Activated CD8-positive, alpha-beta T cell treated with anti-CD3 and anti-CD28 coated beads, Interleukin-2, amount 10 ng/mL, durations not matched to agents 7 days and 5 days (primary cell): ENCODE measurements at regions of chr16 and their contacts with region 1.

Region 1: DNA sequence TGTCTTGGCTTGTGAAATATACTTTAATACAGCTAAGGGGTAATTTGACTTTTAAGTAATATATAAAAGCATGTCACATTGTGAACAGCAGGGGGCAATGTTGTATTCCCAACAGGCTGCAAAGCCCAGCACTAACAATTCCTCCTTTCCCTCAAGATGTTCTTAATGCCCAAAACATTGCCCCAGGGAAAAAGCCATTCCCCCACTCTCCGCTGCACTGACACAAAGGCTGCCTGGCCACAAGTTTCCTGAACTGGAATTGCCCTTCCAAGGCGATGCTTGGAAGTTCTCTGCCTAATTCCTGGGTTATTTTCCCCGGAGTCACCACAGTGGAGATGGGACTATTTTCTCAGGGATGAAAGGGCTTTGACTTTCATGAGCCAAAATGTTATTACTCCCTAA is 27.2 kb downstream of the CLEC16A start:
- DNase-seq: peak; percentile 65
- ATAC-seq: no peak
- H3K4me3 Mint-ChIP-seq: no peak overlapping the region
- H3K27ac Mint-ChIP-seq: no peak overlapping the region
- H3K4me1 Mint-ChIP-seq: peaks cover 80% of the 10 kb centered on the region
- H3K27me3 Mint-ChIP-seq: no peaks in the 10 kb centered on the region

Region 2: GRCh38 chr16:10954903-10955302 is 16.7 kb before region 1 on chr16:
- CTCF ChIA-PET with region 1: interaction called, 124 read pairs
- POLR2A ChIA-PET with region 1: no interaction called
- DNase-seq: no peak
- ATAC-seq: no peak
- H3K4me3 Mint-ChIP-seq: peak overlapping the region; percentile 20
- H3K27ac Mint-ChIP-seq: peak overlapping the region; percentile 66
- H3K4me1 Mint-ChIP-seq: peaks cover 63% of the 10 kb centered on the region
- H3K27me3 Mint-ChIP-seq: no peaks in the 10 kb centered on the region

Region 3: DNA sequence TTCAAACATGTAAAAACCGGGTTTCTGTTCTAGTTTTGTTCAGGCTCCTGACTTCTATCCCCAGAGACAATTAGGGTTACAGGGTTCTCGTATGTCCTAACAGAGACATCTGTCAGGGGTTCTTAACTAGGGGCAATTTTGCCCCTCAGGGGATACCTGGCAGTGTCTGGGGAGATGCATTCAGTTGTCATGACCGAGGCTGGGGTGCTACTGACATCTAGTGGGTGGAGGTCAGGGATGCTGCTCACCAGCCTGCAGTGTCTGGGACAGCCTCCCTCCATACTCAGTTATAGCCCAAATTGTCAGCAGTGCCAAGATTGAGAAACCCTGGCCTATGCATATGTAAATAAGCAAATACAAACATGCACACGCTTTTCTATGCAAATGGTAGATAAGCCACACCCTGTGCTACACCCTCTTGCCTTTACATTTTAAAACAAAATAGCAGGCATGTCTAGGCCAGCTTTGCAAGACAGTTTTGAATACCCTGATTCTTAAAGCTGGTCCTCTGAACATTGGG is 10.2 kb after region 1 on chr16:
- CTCF ChIA-PET with region 1: interaction called, 53 read pairs
- POLR2A ChIA-PET with region 1: no interaction called
- DNase-seq: peak; percentile 75
- ATAC-seq: peak; percentile 83
- H3K4me3 Mint-ChIP-seq: no peak overlapping the region
- H3K27ac Mint-ChIP-seq: peak overlapping the region; percentile 64
- H3K4me1 Mint-ChIP-seq: peaks cover 81% of the 10 kb centered on the region
- H3K27me3 Mint-ChIP-seq: no peaks in the 10 kb centered on the region

Region 4: DNA sequence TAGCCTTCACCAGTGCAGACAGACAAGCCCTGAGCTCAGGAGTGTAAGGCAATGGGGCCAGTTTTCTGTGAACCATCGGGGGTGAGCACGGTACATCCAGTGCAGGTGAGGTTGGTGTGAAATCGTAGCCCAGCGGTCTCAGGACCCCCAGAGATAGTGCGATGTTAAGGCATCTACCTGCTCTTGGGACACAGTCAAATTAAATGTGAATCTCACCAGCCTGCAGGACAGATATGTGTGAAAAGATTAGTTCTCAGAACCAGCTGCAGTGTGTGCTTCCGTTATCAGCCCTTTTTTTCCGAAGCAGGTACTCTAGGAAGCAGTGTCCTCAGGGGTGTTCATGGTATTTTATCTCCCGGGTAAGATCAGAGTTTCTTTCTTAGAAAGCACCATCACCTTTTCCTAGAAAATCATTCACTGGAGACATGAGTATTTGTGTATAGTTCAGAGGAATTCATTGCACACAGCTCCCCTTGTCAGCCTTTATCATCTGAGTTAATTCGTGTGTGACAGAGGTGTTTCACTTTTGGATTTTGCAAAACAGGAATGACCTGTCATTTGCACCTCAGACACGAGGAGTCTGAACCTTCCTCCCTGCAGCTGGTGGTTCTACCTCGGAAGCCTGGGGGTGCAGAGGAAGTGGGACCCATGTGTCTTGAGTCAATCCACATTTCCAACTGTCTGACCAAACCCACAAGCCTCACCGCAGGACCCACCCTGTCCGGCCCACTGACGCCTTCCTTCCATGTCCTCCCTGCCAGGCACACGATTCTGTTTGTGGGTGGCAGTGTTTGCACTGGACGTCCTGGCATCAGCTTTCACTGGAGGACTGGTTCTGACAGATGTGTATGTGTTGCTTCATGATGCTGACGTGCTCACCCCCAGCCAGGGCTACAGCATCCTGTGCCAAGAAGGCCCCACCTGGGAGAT is 80.6 kb after region 1 on chr16:
- CTCF ChIA-PET with region 1: interaction called, 19 read pairs
- POLR2A ChIA-PET with region 1: interaction called, 7 read pairs
- DNase-seq: peak; percentile 92
- ATAC-seq: peak; percentile 83
- H3K4me3 Mint-ChIP-seq: peak overlapping the region; percentile 17
- H3K27ac Mint-ChIP-seq: peak overlapping the region; percentile 97
- H3K4me1 Mint-ChIP-seq: peaks cover 98% of the 10 kb centered on the region
- H3K27me3 Mint-ChIP-seq: no peaks in the 10 kb centered on the region

Region 5: GRCh38 chr16:11076259-11077018 is 104.9 kb after region 1 on chr16:
- CTCF ChIA-PET with region 1: interaction called, 10 read pairs
- POLR2A ChIA-PET with region 1: no interaction called
- DNase-seq: peak; percentile 86
- ATAC-seq: peak; percentile 88
- H3K4me3 Mint-ChIP-seq: peak overlapping the region; percentile 44
- H3K27ac Mint-ChIP-seq: peak overlapping the region; percentile 89
- H3K4me1 Mint-ChIP-seq: peaks cover 97% of the 10 kb centered on the region
- H3K27me3 Mint-ChIP-seq: no peaks in the 10 kb centered on the region

Region 6: DNA sequence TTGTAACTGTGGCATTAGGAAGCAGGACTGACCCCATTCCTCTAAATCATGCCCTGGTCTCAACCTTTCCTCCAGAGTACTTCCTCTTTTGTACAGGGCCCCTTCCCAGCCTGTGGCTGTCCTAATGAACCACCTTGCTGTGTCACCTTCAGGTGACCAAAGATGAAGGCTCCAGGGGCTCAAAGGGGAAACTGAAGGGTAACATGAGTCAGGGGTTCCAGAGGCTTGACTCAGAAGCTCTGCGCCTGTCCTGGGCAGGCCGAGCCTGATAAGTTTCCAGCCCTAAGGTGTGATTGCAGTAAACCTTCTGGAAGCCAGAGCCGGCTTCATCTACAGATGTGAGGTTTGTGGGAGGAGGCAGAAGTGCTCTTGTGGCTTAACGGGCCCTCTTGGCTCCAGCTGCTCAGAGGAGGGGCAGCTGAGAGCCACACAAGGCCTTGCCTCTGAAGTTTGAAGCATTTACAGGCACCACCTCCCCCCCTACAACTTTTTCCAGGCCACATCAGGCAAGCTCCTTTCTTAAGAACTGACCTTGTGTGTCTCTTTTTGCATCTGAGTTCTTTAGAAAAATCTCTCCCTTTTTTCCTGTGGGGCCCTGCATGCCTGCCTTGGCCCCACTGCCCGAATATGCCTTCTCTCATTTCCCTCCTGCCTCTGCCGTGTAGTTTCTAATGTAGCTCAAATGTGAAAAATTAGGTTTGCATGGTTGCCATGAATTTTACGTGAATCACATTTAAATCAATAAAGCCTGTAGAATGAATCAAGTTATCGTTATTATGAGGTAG is 122.7 kb after region 1 on chr16:
- CTCF ChIA-PET with region 1: interaction called, 11 read pairs
- POLR2A ChIA-PET with region 1: no interaction called
- DNase-seq: peak; percentile 81
- ATAC-seq: peak; percentile 85
- H3K4me3 Mint-ChIP-seq: peak overlapping the region; percentile 39
- H3K27ac Mint-ChIP-seq: peak overlapping the region; percentile 90
- H3K4me1 Mint-ChIP-seq: peaks cover 94% of the 10 kb centered on the region
- H3K27me3 Mint-ChIP-seq: no peaks in the 10 kb centered on the region

Region 7: DNA sequence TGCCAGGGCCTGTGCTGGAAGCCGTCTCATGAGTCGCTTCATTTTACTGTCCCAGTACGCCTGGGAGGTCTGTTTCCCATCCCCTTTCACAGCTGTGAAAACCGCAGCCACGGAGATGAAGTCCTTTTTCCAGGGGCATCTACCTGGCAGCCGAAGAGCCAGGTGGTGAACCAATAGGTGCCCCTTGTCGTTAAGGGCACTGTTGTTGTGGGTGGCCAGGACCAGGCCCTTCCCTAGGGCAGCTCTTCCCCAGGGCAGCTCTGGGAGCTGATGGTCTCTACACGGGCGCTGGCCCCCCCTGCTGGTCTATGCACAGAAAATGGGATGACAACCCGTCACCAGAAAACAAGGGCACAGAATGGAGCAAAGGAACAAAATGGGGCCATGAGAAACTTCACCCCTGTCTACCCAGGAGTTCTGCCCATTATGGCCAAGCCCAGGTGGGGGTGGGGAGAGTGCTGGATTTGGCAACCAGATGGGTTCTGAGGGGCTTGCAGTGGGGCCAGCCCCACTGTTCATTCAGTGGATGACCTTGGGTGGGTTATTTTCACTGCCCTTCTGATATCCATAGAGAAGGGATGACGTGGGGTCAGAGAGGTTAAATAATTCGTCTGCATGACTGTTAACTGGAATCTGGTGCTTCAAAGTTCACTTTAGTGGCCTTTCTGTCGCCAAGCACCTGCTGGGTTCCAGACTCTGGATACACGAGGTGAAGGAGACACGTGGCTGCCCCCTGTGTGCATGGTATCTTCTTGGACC is 385.2 kb after region 1 on chr16:
- CTCF ChIA-PET with region 1: interaction called, 20 read pairs
- POLR2A ChIA-PET with region 1: interaction called, 3 read pairs
- DNase-seq: peak; percentile 68
- ATAC-seq: no peak
- H3K4me3 Mint-ChIP-seq: peak overlapping the region; percentile 76
- H3K27ac Mint-ChIP-seq: peak overlapping the region; percentile 65
- H3K4me1 Mint-ChIP-seq: peaks cover 91% of the 10 kb centered on the region
- H3K27me3 Mint-ChIP-seq: peaks cover 5% of the 10 kb centered on the region